CD8-positive, alpha-beta T cell (primary cell): ENCODE measurements at regions of chr11 and their contacts with region 1.

Region 1: DNA sequence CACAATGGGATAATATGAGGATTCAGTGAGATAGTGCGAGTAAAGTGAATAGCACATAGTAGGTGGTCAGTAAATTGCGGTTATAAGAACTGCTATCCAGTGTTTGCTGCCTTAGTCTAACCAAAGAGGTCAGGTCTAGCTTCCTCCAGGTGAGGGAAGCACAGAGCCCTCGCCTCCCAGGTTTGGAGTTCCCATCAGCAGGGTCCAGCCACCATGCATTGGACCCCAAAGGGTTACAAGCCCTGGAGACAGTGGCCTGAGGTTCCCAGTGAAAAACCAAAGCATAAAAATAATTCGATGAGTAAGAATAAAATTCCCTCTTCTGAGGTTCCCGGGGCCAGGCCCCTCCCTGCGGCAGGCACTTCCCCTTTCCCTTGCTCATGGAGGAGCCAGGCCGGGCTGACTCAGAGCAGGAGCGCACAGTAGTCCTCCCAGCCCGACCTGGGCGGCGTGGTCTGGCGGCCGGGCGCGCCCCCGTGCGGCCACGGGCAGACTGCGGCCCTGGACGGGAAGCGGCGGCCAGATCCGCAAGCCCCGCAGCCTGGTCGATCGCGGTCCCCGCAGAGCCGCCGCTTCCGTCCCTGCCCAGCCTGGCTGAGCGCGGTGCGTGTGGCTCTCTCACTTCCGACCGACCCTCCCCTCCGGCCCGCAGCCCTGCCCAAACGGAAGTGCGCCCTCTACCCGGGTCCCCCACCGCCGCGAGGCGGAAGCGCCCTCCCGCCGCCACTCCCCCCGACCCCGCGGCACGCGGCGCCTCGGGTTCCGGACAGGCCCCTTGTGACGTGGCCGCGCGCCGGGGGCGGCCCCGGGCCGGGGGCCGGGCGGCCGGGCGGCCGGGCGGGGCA is at the start of gene SLC39A13:
- DNase-seq: peak; percentile 77 to 97 (median 90)
- ATAC-seq: peak; percentile 88
- H3K4me3 ChIP-seq: peak within 1 kb of the TSS; percentile 70 to 85
- H3K4me3 Mint-ChIP-seq: peak within 1 kb of the TSS; percentile 93
- H3K27ac ChIP-seq: peak within 1 kb of the TSS; percentile 64 to 87
- H3K27ac Mint-ChIP-seq: peak within 1 kb of the TSS; percentile 96
- H3K4me1 ChIP-seq: peaks cover 18% of the 10 kb centered on the region
- H3K4me1 Mint-ChIP-seq: peaks cover 25% of the 10 kb centered on the region
- H3K27me3 ChIP-seq: no peaks in the 10 kb centered on the region
- H3K27me3 Mint-ChIP-seq: no peaks in the 10 kb centered on the region
- CTCF ChIP-seq: peak; percentile 89
- total RNA-seq, gene SLC39A13: 34.0 to 34.6 TPM

Region 2: GRCh38 chr11:47213985-47214564 is 193.9 kb before region 1 on chr11:
- CTCF ChIA-PET with region 1: interaction called, 3 read pairs
- POLR2A ChIA-PET with region 1: interaction called, 3 read pairs
- intact Hi-C with region 1: loop called in 1 of 2 experiments (anchors 1 kb)
- DNase-seq: peak; percentile 64 to 90 (median 84)
- ATAC-seq: peak; percentile 67
- H3K4me3 ChIP-seq: peak overlapping the region; percentile 65 to 95
- H3K4me3 Mint-ChIP-seq: peak overlapping the region; percentile 96
- H3K27ac ChIP-seq: peak overlapping the region; percentile 85 to 93
- H3K27ac Mint-ChIP-seq: peak overlapping the region; percentile 97
- H3K4me1 ChIP-seq: peaks cover 16% of the 10 kb centered on the region
- H3K4me1 Mint-ChIP-seq: peaks cover 31% of the 10 kb centered on the region
- H3K27me3 ChIP-seq: no peaks in the 10 kb centered on the region
- H3K27me3 Mint-ChIP-seq: no peaks in the 10 kb centered on the region
- CTCF ChIP-seq: no peak

Region 3: GRCh38 chr11:47269002-47269828 is 138.8 kb before region 1 on chr11:
- CTCF ChIA-PET with region 1: interaction called, 6 read pairs
- POLR2A ChIA-PET with region 1: no interaction called
- intact Hi-C with region 1: loop called (anchors 1 kb)
- DNase-seq: peak; percentile 73 to 93 (median 85)
- ATAC-seq: peak; percentile 57
- H3K4me3 ChIP-seq: peak overlapping the region; percentile 71
- H3K4me3 Mint-ChIP-seq: peak overlapping the region; percentile 88
- H3K27ac ChIP-seq: peak overlapping the region; percentile 72 to 92
- H3K27ac Mint-ChIP-seq: peak overlapping the region; percentile 94
- H3K4me1 ChIP-seq: peaks cover 43% of the 10 kb centered on the region
- H3K4me1 Mint-ChIP-seq: peaks cover 53% of the 10 kb centered on the region
- H3K27me3 ChIP-seq: no peaks in the 10 kb centered on the region
- H3K27me3 Mint-ChIP-seq: no peaks in the 10 kb centered on the region
- CTCF ChIP-seq: peak; percentile 4

Region 4: DNA sequence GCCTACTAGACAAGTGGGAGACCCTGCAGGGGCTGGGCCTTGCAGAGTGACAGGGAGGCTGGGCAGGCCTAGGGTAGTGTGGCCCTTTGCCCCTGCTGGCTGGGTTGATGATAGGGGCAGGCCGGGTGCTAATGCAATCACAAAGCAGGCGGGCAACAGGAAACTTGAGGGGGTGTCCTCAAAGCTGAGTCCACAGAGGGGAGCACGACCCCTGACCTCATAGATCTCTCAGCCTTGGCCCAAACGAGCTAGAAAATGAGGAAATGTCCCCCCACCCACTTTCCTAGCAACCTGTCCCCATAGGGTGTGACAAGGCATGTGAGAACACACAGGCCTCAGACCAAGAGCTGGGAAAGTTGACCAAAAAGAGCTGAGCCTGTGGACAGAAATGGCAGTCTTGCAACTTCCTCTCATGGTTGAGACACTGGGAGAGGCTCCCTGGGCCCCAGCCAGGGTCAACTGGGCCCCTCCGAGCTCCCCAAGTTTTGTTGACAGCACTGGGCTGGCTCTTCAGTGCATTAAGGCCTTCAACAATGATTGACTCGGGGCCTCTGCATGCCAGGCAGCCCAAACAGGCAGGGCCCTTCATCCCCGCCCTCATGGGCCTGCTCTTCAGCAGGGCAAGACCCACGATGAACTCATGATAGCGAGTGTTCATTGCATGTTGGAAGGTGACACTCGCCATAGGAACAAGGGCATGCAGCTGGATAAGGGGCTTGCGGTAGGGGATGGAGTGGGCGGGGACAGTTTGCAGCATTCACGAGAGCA is 19.9 kb before region 1 on chr11:
- CTCF ChIA-PET with region 1: interaction called, 26 read pairs
- POLR2A ChIA-PET with region 1: interaction called, 14 read pairs
- intact Hi-C with region 1: no loop called
- DNase-seq: peak in 1 of 9 experiments; percentile 18
- ATAC-seq: no peak
- H3K4me3 ChIP-seq: no peak overlapping the region
- H3K4me3 Mint-ChIP-seq: peak overlapping the region; percentile 11
- H3K27ac ChIP-seq: no peak overlapping the region
- H3K27ac Mint-ChIP-seq: no peak overlapping the region
- H3K4me1 ChIP-seq: peaks cover 33% of the 10 kb centered on the region
- H3K4me1 Mint-ChIP-seq: peaks cover 41% of the 10 kb centered on the region
- H3K27me3 ChIP-seq: no peaks in the 10 kb centered on the region
- H3K27me3 Mint-ChIP-seq: no peaks in the 10 kb centered on the region
- CTCF ChIP-seq: no peak

Region 5: DNA sequence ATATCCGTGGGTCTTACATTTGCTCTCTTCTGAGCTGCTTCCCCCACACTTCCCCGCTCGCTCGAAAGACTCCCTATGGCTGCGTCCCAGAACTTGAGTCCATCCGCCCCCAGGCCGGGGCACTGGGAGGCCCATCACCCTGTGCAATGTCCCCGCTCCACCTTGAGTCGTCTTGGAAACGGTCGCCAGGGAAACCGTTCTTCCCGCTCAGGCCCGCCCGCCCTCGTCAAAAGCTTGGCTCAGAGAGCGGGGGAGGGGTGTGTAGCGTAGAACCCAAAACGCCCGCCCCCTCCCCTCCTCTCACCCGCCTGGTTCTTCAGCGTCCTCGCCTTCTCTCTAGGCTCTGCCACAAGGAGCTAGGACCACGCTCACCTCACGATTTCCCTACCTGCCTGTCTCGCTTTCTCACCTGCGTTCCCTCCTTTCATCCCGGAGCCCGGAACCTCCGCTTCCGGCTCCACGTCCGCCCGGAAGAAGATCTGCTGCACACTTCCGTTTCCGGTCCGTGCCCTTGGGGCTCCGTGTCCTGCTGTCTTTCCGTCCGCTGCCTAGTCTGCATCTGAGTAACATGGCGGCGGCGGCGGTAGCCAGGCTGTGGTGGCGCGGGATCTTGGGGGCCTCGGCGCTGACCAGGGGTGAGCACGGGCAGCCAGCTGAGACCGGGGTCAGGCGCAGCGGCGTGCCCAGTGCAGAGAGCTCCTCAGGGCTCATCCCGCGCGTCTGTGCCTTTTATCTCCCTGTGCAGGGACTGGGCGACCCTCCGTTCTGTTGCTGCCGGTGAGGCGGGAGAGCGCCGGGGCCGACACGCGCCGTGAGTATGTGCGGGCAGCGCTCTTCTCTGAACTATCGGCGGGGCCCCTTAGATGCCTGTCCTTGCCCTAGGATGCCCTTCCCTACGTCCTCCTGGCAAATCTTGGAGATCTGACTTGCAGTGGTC is 170.8 kb after region 1 on chr11 and contains the starts of genes KBTBD4 and NDUFS3:
- CTCF ChIA-PET with region 1: interaction called, 4 read pairs
- POLR2A ChIA-PET with region 1: no interaction called
- intact Hi-C with region 1: loop called (anchors 1 to 2 kb)
- DNase-seq: peak; percentile 74 to 95 (median 89)
- ATAC-seq: peak; percentile 94
- H3K4me3 ChIP-seq: peak within 1 kb of the TSS; percentile 90 to 92
- H3K4me3 Mint-ChIP-seq: peak within 1 kb of the TSS; percentile 99
- H3K27ac ChIP-seq: peak within 1 kb of the TSS; percentile 76 to 84
- H3K27ac Mint-ChIP-seq: peak within 1 kb of the TSS; percentile 97
- H3K4me1 ChIP-seq: peaks cover 31% of the 10 kb centered on the region
- H3K4me1 Mint-ChIP-seq: peaks cover 54% of the 10 kb centered on the region
- H3K27me3 ChIP-seq: no peaks in the 10 kb centered on the region
- H3K27me3 Mint-ChIP-seq: no peaks in the 10 kb centered on the region
- CTCF ChIP-seq: no peak
- total RNA-seq, gene KBTBD4: 31.8 to 32.6 TPM
- total RNA-seq, gene NDUFS3: 159 to 179 TPM

Region 6: DNA sequence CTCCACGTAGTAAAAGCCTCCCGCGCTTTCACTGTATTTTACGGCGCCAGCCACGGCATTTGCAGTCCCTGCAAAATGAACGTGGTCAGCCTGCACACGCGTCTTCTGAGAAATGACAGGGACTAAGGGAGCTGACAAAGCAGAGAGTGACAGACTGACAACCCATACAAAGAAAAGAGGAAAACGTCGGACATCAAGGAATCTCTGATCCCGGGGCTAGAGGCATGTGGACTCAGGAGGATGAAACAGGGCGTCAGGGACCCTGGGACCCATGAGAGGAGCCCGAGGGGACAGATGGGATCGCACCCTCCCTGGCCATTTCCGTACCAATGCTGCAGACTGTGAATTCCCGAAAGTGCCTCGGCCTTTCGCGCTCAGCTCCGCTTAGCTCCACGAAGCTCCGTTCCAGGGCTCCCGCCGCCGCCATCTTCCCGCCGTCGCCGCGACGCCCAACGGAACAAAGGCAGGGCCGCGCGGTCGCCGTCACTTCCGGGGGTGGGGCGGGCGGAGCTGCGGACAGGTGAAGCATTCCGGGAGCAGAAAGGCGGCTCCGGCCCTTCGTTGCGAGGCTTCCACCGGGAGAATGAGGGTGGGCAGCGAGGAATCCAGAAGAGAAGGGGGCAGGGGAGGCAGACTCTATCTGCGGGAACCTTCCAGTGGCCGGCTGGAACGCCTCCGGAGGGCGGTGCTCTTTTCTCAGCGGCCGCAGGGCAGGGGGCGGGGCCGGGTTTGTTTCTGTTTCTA is 440.1 kb after region 1 on chr11 and contains the start of gene NUP160:
- CTCF ChIA-PET with region 1: no interaction called
- POLR2A ChIA-PET with region 1: no interaction called
- intact Hi-C with region 1: loop called in 1 of 2 experiments (anchors 10 kb)
- DNase-seq: peak; percentile 70 to 92 (median 88)
- ATAC-seq: peak; percentile 87
- H3K4me3 ChIP-seq: peak within 1 kb of the TSS; percentile 89 to 99
- H3K4me3 Mint-ChIP-seq: peak within 1 kb of the TSS; percentile 100
- H3K27ac ChIP-seq: peak within 1 kb of the TSS; percentile 88 to 95
- H3K27ac Mint-ChIP-seq: peak within 1 kb of the TSS; percentile 99
- H3K4me1 ChIP-seq: peaks cover 35% of the 10 kb centered on the region
- H3K4me1 Mint-ChIP-seq: peaks cover 45% of the 10 kb centered on the region
- H3K27me3 ChIP-seq: no peaks in the 10 kb centered on the region
- H3K27me3 Mint-ChIP-seq: no peaks in the 10 kb centered on the region
- CTCF ChIP-seq: no peak
- total RNA-seq, gene NUP160: 38.6 to 46.6 TPM